ENCODE measurements at regions of chr1 and their contacts with region 1.

Region 1: GRCh38 chr1:37556712-37557196 is at the start of gene DNALI1:
- DNase-seq: peak; percentile 74 to 94 (median 87)

Region 2: GRCh38 chr1:37514350-37515184 is 42.2 kb before region 1 on chr1 and contains the start of gene MEAF6:
- intact Hi-C with region 1: loop called (anchors 2 kb)
- DNase-seq: peak; percentile 33 to 92 (median 84)

Region 3: GRCh38 chr1:37741130-37741529 is 184.4 kb after region 1 on chr1:
- intact Hi-C with region 1: no loop called
- DNase-seq: peak in 6 of 42 donors; percentile 24 to 50 (median 36)

Measured in head of caudate nucleus (tissue), 42 donors.